ENCODE measurements at regions of chr14 and their contacts with region 1.

Region 1: GRCh38 chr14:65824285-65824977 is 411.9 kb downstream of the FUT8 start:
- DNase-seq: peak; percentile 80
- ATAC-seq: peak; percentile 98
- H3K4me3 ChIP-seq: no peak overlapping the region
- H3K4me3 Mint-ChIP-seq: no peak overlapping the region
- H3K27ac ChIP-seq: no peak overlapping the region
- H3K27ac Mint-ChIP-seq: no peak overlapping the region
- H3K4me1 ChIP-seq: peaks cover 0 to 2% of the 10 kb centered on the region in 2 donors
- H3K4me1 Mint-ChIP-seq: peaks cover 3% of the 10 kb centered on the region
- H3K27me3 ChIP-seq: no peaks in the 10 kb centered on the region
- H3K27me3 Mint-ChIP-seq: peaks cover 3% of the 10 kb centered on the region
- CTCF ChIP-seq: peak; percentile 98

Region 2: DNA sequence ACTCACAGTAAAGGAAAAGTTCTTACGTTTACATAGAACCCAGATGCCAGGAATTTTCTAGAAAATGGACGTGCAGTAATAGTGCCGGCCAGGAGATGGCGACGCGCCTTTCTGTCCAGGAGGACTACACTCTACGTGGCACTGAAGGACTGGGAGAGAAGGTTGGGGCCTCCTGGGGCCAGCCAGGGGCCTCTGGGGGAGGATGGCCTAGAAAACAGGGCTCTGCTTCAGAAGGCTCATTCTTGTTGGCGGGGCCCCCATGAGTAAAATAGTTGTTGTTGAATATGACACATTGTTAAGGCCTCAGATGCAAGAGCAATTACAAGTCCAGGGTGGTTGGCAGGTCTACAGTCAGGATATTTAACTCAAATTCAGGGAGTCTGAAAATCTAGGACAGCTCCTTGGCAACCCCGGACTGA is 602.0 kb before region 1 on chr14:
- CTCF ChIA-PET with region 1: interaction called, 26 read pairs
- POLR2A ChIA-PET with region 1: no interaction called
- intact Hi-C with region 1: loop called (anchors 1 kb)
- DNase-seq: peak; percentile 72
- ATAC-seq: peak; percentile 89
- H3K4me3 ChIP-seq: no peak overlapping the region
- H3K4me3 Mint-ChIP-seq: no peak overlapping the region
- H3K27ac ChIP-seq: no peak overlapping the region
- H3K27ac Mint-ChIP-seq: peak overlapping the region; percentile 39
- H3K4me1 ChIP-seq: peaks cover 42 to 56% of the 10 kb centered on the region in 2 donors
- H3K4me1 Mint-ChIP-seq: peaks cover 49% of the 10 kb centered on the region
- H3K27me3 ChIP-seq: no peaks in the 10 kb centered on the region
- H3K27me3 Mint-ChIP-seq: no peaks in the 10 kb centered on the region
- CTCF ChIP-seq: peak; percentile 87

Region 3: GRCh38 chr14:65229751-65230749 is 594.4 kb before region 1 on chr14:
- CTCF ChIA-PET with region 1: interaction called, 26 read pairs
- POLR2A ChIA-PET with region 1: no interaction called
- intact Hi-C with region 1: loop called (anchors 1 kb)
- DNase-seq: peak; percentile 59
- ATAC-seq: peak; percentile 50
- H3K4me3 ChIP-seq: peak overlapping the region; percentile 36 to 60 (median 58)
- H3K4me3 Mint-ChIP-seq: peak overlapping the region; percentile 90
- H3K27ac ChIP-seq: peak overlapping the region; percentile 74 to 83
- H3K27ac Mint-ChIP-seq: peak overlapping the region; percentile 95
- H3K4me1 ChIP-seq: peaks cover 63 to 71% of the 10 kb centered on the region in 2 donors
- H3K4me1 Mint-ChIP-seq: peaks cover 58% of the 10 kb centered on the region
- H3K27me3 ChIP-seq: no peaks in the 10 kb centered on the region
- H3K27me3 Mint-ChIP-seq: no peaks in the 10 kb centered on the region
- CTCF ChIP-seq: no peak

Region 4: GRCh38 chr14:65255536-65256461 is 568.6 kb before region 1 on chr14:
- CTCF ChIA-PET with region 1: interaction called, 11 read pairs
- POLR2A ChIA-PET with region 1: no interaction called
- intact Hi-C with region 1: no loop called
- DNase-seq: peak; percentile 34
- ATAC-seq: peak; percentile 53
- H3K4me3 ChIP-seq: no peak overlapping the region
- H3K4me3 Mint-ChIP-seq: no peak overlapping the region
- H3K27ac ChIP-seq: no peak overlapping the region
- H3K27ac Mint-ChIP-seq: no peak overlapping the region
- H3K4me1 ChIP-seq: peaks cover 16 to 18% of the 10 kb centered on the region in 2 donors
- H3K4me1 Mint-ChIP-seq: peaks cover 35% of the 10 kb centered on the region
- H3K27me3 ChIP-seq: no peaks in the 10 kb centered on the region
- H3K27me3 Mint-ChIP-seq: no peaks in the 10 kb centered on the region
- CTCF ChIP-seq: no peak

Region 5: GRCh38 chr14:65281991-65282895 is 542.2 kb before region 1 on chr14:
- CTCF ChIA-PET with region 1: interaction called, 21 read pairs
- POLR2A ChIA-PET with region 1: no interaction called
- intact Hi-C with region 1: loop called (anchors 5 kb)
- DNase-seq: peak; percentile 47
- ATAC-seq: peak; percentile 11
- H3K4me3 ChIP-seq: peak overlapping the region in 4 of 5 experiments; percentile 1 to 54 (median 38)
- H3K4me3 Mint-ChIP-seq: peak overlapping the region; percentile 85
- H3K27ac ChIP-seq: peak overlapping the region; percentile 60 to 83
- H3K27ac Mint-ChIP-seq: peak overlapping the region; percentile 91
- H3K4me1 ChIP-seq: peaks cover 47 to 48% of the 10 kb centered on the region in 2 donors
- H3K4me1 Mint-ChIP-seq: peaks cover 58% of the 10 kb centered on the region
- H3K27me3 ChIP-seq: no peaks in the 10 kb centered on the region
- H3K27me3 Mint-ChIP-seq: no peaks in the 10 kb centered on the region
- CTCF ChIP-seq: no peak

Region 6: DNA sequence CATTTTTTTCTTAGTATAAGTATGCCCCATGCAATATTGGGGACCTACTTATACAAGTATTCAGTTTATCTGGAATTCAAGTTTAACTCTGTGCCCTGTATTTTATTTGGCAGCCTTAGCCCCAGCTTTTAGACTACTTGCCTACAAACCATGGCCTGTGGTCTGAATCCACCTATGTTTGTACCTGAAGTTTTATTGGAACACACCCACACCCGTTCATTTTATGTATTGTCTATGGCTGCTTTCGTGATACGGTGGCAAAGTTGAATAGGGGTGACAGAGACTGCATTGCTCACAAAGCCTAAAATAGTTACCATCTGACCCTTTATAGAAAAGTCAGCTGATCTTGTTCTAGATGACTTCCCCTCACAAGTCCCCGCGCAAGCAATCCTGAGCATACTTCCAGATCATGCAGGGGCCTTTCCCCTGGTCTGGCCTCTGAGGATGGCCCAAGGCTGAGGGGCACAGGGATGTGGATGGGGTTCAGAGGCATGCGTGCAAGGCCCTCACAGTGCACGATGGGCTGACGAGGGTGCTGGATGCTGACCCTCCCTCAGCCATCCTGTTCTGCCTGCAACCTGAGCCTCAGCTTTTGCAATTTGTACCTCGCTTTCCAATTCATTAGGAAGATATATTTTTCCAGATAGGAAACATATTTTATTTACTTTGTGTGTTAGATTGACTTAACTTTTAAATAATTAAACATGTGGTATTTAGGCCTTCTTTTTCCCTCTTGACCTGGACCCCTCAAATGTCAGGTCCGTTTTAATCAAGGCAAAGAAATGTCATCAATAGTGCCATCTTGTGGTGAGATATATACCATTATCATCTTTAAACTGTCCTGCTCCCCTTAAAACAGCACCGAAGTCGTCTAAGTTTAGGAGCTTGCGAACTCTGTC is 134.5 kb after region 1 on chr14:
- CTCF ChIA-PET with region 1: interaction called, 10 read pairs
- POLR2A ChIA-PET with region 1: no interaction called
- intact Hi-C with region 1: loop called (anchors 10 kb)
- DNase-seq: peak; percentile 60
- ATAC-seq: peak; percentile 41
- H3K4me3 ChIP-seq: no peak overlapping the region
- H3K4me3 Mint-ChIP-seq: no peak overlapping the region
- H3K27ac ChIP-seq: no peak overlapping the region
- H3K27ac Mint-ChIP-seq: no peak overlapping the region
- H3K4me1 ChIP-seq: no peaks in the 10 kb centered on the region
- H3K4me1 Mint-ChIP-seq: no peaks in the 10 kb centered on the region
- H3K27me3 ChIP-seq: peaks cover 0 to 15% (median 7%) of the 10 kb centered on the region in 4 experiments
- H3K27me3 Mint-ChIP-seq: peaks cover 30% of the 10 kb centered on the region
- CTCF ChIP-seq: peak; percentile 74

Region 7: GRCh38 chr14:66508846-66509621 is 684.6 kb after region 1 on chr14:
- CTCF ChIA-PET with region 1: no interaction called
- POLR2A ChIA-PET with region 1: no interaction called
- intact Hi-C with region 1: no loop called
- DNase-seq: peak; percentile 63
- ATAC-seq: peak; percentile 5
- H3K4me3 ChIP-seq: peak overlapping the region; percentile 74 to 90 (median 81)
- H3K4me3 Mint-ChIP-seq: peak overlapping the region; percentile 89
- H3K27ac ChIP-seq: peak overlapping the region in 1 of 2 donors; percentile 66
- H3K27ac Mint-ChIP-seq: peak overlapping the region; percentile 80
- H3K4me1 ChIP-seq: peaks cover 7 to 18% of the 10 kb centered on the region in 2 donors
- H3K4me1 Mint-ChIP-seq: peaks cover 25% of the 10 kb centered on the region
- H3K27me3 ChIP-seq: peaks cover 0 to 8% (median 0%) of the 10 kb centered on the region in 4 experiments
- H3K27me3 Mint-ChIP-seq: peaks cover 6% of the 10 kb centered on the region
- CTCF ChIP-seq: no peak

Measured in B cell (primary cell).